Activated T-helper 2 cell treated with anti-CD3 and anti-CD28 coated beads, Interferon-gamma antibody, Interleukin-2, Interleukin-4, amounts not matched to agents 10 μg/mL and 5 μg/mL and 100 μg/mL, durations not matched to agents 14 hours and 24 hours and 36 hours (primary cell): ENCODE measurements at regions of chr12 and their contacts with region 1.

Region 1: GRCh38 chr12:7219599-7220243 is 30.2 kb downstream of the PEX5 start:
- DNase-seq: peak; percentile 49
- H3K4me3 Mint-ChIP-seq: no peak overlapping the region
- H3K27ac Mint-ChIP-seq: no peak overlapping the region
- H3K4me1 Mint-ChIP-seq: no peaks in the 10 kb centered on the region
- H3K27me3 Mint-ChIP-seq: peaks cover 3% of the 10 kb centered on the region

Region 2: DNA sequence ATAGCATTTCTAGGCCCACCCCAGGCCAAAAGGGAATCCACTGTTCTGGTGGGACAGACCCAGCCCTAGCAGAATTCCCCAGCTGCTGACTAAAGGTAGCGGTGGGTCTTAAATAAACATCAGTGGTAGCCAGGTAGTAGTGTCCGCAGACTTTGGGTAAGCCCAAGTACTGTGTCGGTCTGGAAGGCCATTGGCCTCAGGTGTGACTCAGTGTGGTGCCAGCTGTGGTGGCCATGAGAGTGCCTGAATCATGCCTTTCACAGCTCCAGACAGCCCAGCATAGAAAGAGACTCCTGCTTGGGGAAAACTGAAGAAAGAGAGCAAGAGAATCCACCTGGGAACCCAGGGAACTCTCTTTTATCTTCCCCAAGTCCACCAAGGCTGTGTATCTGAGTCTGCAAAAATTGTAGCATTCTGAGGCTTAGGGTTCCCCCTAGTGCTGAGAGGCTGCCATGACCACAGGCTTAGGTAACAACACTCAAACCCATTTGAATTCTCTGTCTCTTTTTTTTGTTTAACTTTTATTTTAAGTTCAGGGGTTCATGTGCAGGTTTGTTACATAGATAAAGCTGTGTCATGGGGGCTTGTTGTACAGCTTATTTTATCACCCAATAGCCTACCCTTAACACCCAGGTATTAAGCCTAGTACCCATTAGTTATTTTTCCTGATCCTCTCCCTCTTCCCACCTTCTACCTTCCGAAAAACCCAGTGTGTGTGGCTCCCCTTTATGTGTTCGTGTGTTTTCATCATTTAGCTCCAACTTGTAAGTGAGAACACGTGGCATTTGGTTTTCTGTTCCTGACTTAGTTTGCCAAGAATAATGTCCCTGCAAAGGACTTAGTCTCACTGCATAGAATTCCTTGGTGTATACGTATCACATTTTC is 240.9 kb after region 1 on chr12:
- intact Hi-C with region 1: loop called (anchors 1 kb)
- DNase-seq: peak; percentile 31
- H3K4me3 Mint-ChIP-seq: no peak overlapping the region
- H3K27ac Mint-ChIP-seq: no peak overlapping the region
- H3K4me1 Mint-ChIP-seq: no peaks in the 10 kb centered on the region
- H3K27me3 Mint-ChIP-seq: peaks cover 2% of the 10 kb centered on the region